Mammary epithelial cell (primary cell): ENCODE measurements at regions of chr3 and their contacts with region 1.

Region 1: GRCh38 chr3:31105438-31106077 is 211.1 kb upstream of the GADL1 start:
- DNase-seq: peak; percentile 97
- H3K4me3 ChIP-seq: peak overlapping the region in 2 of 3 experiments; percentile 3 to 5
- H3K27ac ChIP-seq: peak overlapping the region; percentile 77
- H3K4me1 ChIP-seq: peaks cover 56% of the 10 kb centered on the region
- H3K27me3 ChIP-seq: no peaks in the 10 kb centered on the region
- CTCF ChIP-seq: no peak

Region 2: GRCh38 chr3:30672959-30673358 is 432.6 kb before region 1 on chr3:
- CTCF ChIA-PET with region 1: no interaction called
- dilution Hi-C with region 1: no loop called
- in situ Hi-C with region 1: no loop called
- intact Hi-C with region 1: no loop called
- DNase-seq: no peak
- H3K4me3 ChIP-seq: no peak overlapping the region
- H3K27ac ChIP-seq: no peak overlapping the region
- H3K4me1 ChIP-seq: no peaks in the 10 kb centered on the region
- H3K27me3 ChIP-seq: no peaks in the 10 kb centered on the region
- CTCF ChIP-seq: no peak

Region 3: DNA sequence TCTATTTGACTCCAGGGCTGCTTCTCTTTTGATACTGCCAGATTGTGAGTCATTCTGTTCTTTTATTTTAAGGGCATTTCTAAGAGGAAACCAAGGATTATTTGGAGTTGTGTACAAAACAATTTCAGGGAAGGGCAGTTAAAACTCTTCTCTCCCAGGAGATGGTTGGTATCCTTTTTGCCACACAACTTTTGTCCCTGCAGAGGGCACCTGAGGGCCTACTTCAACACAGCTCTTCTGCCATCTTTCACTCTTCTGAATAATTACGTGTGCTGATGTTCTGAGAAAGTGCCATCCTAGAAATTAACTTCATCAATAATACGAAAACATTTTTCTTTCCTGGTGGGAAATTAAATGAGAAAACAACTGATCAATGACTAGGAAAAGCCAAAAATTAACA is 135.4 kb before region 1 on chr3:
- CTCF ChIA-PET with region 1: no interaction called
- dilution Hi-C with region 1: no loop called
- in situ Hi-C with region 1: no loop called
- intact Hi-C with region 1: loop called (anchors 1 kb)
- DNase-seq: peak; percentile 20
- H3K4me3 ChIP-seq: no peak overlapping the region
- H3K27ac ChIP-seq: no peak overlapping the region
- H3K4me1 ChIP-seq: peaks cover under 1% of the 10 kb centered on the region
- H3K27me3 ChIP-seq: no peaks in the 10 kb centered on the region
- CTCF ChIP-seq: peak; percentile 14 to 64

Region 4: DNA sequence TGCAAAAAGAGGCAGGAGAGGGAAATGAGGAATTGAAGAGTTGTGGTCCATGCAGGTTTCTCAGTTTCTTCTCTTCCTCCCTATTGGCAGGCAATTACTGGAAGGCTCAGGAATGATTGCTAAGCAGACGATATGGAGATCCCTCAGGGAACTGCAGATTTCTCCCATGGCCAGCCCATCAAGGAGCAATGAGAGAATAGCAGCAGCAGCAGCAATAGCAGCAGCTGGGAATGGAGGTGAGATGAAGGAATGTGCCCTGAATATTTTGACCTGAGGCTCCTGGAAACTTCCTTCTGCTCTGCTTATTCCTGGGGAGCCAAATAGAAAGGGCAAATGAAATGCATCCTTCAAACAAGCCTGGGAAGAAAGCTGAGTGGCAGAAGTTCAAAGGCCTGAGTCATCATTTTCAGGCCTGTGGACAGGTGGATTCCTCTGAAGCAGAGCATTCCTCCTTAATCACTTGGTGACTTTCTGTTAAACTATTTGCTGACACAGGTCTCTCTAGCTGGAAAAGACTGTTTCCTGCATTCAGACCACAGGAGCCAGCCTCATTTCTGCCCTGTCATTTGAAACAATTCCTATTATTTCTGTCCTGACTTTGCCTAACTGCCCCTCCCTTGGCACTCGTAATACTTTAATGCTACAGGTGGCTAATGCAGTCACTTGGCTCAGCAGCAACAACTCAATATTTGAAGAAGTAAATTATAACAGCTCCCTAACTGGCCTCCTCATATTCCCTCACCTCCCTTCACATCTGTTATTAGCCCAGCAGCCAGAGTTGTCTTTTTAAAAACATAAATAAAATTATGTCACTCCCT is 64.2 kb before region 1 on chr3:
- CTCF ChIA-PET with region 1: no interaction called
- dilution Hi-C with region 1: no loop called
- in situ Hi-C with region 1: no loop called
- intact Hi-C with region 1: loop called (anchors 1 kb)
- DNase-seq: peak; percentile 90
- H3K4me3 ChIP-seq: no peak overlapping the region
- H3K27ac ChIP-seq: peak overlapping the region; percentile 11
- H3K4me1 ChIP-seq: peaks cover 44% of the 10 kb centered on the region
- H3K27me3 ChIP-seq: no peaks in the 10 kb centered on the region
- CTCF ChIP-seq: no peak

Region 5: GRCh38 chr3:31067009-31067408 is 38.5 kb before region 1 on chr3:
- CTCF ChIA-PET with region 1: no interaction called
- dilution Hi-C with region 1: no loop called
- in situ Hi-C with region 1: no loop called
- intact Hi-C with region 1: loop called (anchors 5 kb)
- DNase-seq: peak; percentile 96
- H3K4me3 ChIP-seq: no peak overlapping the region
- H3K27ac ChIP-seq: no peak overlapping the region
- H3K4me1 ChIP-seq: peaks cover 15% of the 10 kb centered on the region
- H3K27me3 ChIP-seq: no peaks in the 10 kb centered on the region
- CTCF ChIP-seq: no peak

Region 6: GRCh38 chr3:31077021-31077601 is 28.4 kb before region 1 on chr3:
- CTCF ChIA-PET with region 1: no interaction called
- dilution Hi-C with region 1: no loop called
- in situ Hi-C with region 1: no loop called
- intact Hi-C with region 1: loop called (anchors 1 kb)
- DNase-seq: peak; percentile 99
- H3K4me3 ChIP-seq: no peak overlapping the region
- H3K27ac ChIP-seq: peak overlapping the region; percentile 78
- H3K4me1 ChIP-seq: peaks cover 39% of the 10 kb centered on the region
- H3K27me3 ChIP-seq: no peaks in the 10 kb centered on the region
- CTCF ChIP-seq: no peak